ENCODE measurements at regions of chr6 and their contacts with region 1.

Region 1: GRCh38 chr6:136289579-136290409 is at the start of gene BCLAF1:
- DNase-seq: peak; percentile 98 to 100 (median 100)
- ATAC-seq: peak; percentile 84
- H3K4me3 ChIP-seq: peak within 1 kb of the TSS; percentile 93
- H3K4me3 Mint-ChIP-seq: peak within 1 kb of the TSS; percentile 94 to 100 (median 98)
- H3K27ac ChIP-seq: peak within 1 kb of the TSS; percentile 99
- H3K27ac Mint-ChIP-seq: peak within 1 kb of the TSS; percentile 99 to 100 (median 100)
- H3K4me1 ChIP-seq: peaks cover 35 to 36% of the 10 kb centered on the region in 2 donors
- H3K4me1 Mint-ChIP-seq: peaks cover 19 to 74% (median 58%) of the 10 kb centered on the region in 7 donors
- H3K27me3 ChIP-seq: no peaks in the 10 kb centered on the region
- H3K27me3 Mint-ChIP-seq: peaks cover 0 to 2% (median 0%) of the 10 kb centered on the region in 5 donors
- total RNA-seq, gene BCLAF1: 202 to 439 (median 262) TPM

Region 2: GRCh38 chr6:135054569-135055498 is 1235.0 kb before region 1 on chr6 and contains the start of gene HBS1L:
- CTCF ChIA-PET with region 1: no interaction called
- POLR2A ChIA-PET with region 1: interaction called, 8 read pairs
- intact Hi-C with region 1: loop called in 1 of 2 experiments (anchors 1 kb)
- DNase-seq: peak; percentile 93 to 98 (median 96)
- ATAC-seq: peak; percentile 97
- H3K4me3 ChIP-seq: peak within 1 kb of the TSS; percentile 96
- H3K4me3 Mint-ChIP-seq: peak within 1 kb of the TSS; percentile 89 to 100 (median 97)
- H3K27ac ChIP-seq: peak within 1 kb of the TSS; percentile 97
- H3K27ac Mint-ChIP-seq: peak within 1 kb of the TSS; percentile 97 to 100 (median 98)
- H3K4me1 ChIP-seq: peaks cover 10 to 13% of the 10 kb centered on the region in 2 donors
- H3K4me1 Mint-ChIP-seq: peaks cover 21 to 51% (median 46%) of the 10 kb centered on the region in 7 donors
- H3K27me3 ChIP-seq: no peaks in the 10 kb centered on the region
- H3K27me3 Mint-ChIP-seq: peaks cover 0 to 3% (median 0%) of the 10 kb centered on the region in 5 donors
- total RNA-seq, gene HBS1L: 70.0 to 112 (median 83.1) TPM

Region 3: GRCh38 chr6:135497412-135498269 is 792.2 kb before region 1 on chr6 and contains the start of gene AHI1:
- CTCF ChIA-PET with region 1: no interaction called
- POLR2A ChIA-PET with region 1: interaction called, 50 read pairs
- intact Hi-C with region 1: loop called (anchors 1 kb)
- DNase-seq: peak; percentile 65 to 94 (median 85)
- ATAC-seq: peak; percentile 89
- H3K4me3 ChIP-seq: peak within 1 kb of the TSS; percentile 64
- H3K4me3 Mint-ChIP-seq: peak within 1 kb of the TSS in 4 of 10 donors; percentile 32 to 53 (median 37)
- H3K27ac ChIP-seq: peak within 1 kb of the TSS; percentile 95
- H3K27ac Mint-ChIP-seq: no peak within 1 kb of the TSS
- H3K4me1 ChIP-seq: peaks cover 0 to 5% of the 10 kb centered on the region in 2 donors
- H3K4me1 Mint-ChIP-seq: peaks cover 4 to 19% (median 9%) of the 10 kb centered on the region in 7 donors
- H3K27me3 ChIP-seq: no peaks in the 10 kb centered on the region
- H3K27me3 Mint-ChIP-seq: peaks cover 0 to 3% (median 0%) of the 10 kb centered on the region in 5 donors
- total RNA-seq, gene AHI1: 12.5 to 31.3 (median 26.3) TPM

Region 4: GRCh38 chr6:135675862-135676261 is 613.9 kb before region 1 on chr6:
- CTCF ChIA-PET with region 1: no interaction called
- POLR2A ChIA-PET with region 1: no interaction called
- intact Hi-C with region 1: loop called in 1 of 2 experiments (anchors 10 kb)
- DNase-seq: peak in 7 of 9 donors; percentile 51 to 71 (median 63)
- ATAC-seq: peak; percentile 79
- H3K4me3 ChIP-seq: no peak overlapping the region
- H3K4me3 Mint-ChIP-seq: no peak overlapping the region
- H3K27ac ChIP-seq: no peak overlapping the region
- H3K27ac Mint-ChIP-seq: peak overlapping the region in 2 of 9 donors; percentile 53 to 63
- H3K4me1 ChIP-seq: no peaks in the 10 kb centered on the region
- H3K4me1 Mint-ChIP-seq: peaks cover 0 to 39% (median 0%) of the 10 kb centered on the region in 7 donors
- H3K27me3 ChIP-seq: peaks cover 0 to 4% of the 10 kb centered on the region in 2 donors
- H3K27me3 Mint-ChIP-seq: no peaks in the 10 kb centered on the region

Region 5: GRCh38 chr6:136262940-136263339 is 26.9 kb before region 1 on chr6:
- CTCF ChIA-PET with region 1: interaction called, 4 read pairs
- POLR2A ChIA-PET with region 1: interaction called, 154 read pairs
- intact Hi-C with region 1: no loop called
- DNase-seq: no peak
- ATAC-seq: peak; percentile 19
- H3K4me3 ChIP-seq: no peak overlapping the region
- H3K4me3 Mint-ChIP-seq: no peak overlapping the region
- H3K27ac ChIP-seq: no peak overlapping the region
- H3K27ac Mint-ChIP-seq: peak overlapping the region in 3 of 9 donors; percentile 7 to 12 (median 9)
- H3K4me1 ChIP-seq: peaks cover 0 to 5% of the 10 kb centered on the region in 2 donors
- H3K4me1 Mint-ChIP-seq: peaks cover 17 to 51% (median 40%) of the 10 kb centered on the region in 7 donors
- H3K27me3 ChIP-seq: no peaks in the 10 kb centered on the region
- H3K27me3 Mint-ChIP-seq: no peaks in the 10 kb centered on the region

Region 6: DNA sequence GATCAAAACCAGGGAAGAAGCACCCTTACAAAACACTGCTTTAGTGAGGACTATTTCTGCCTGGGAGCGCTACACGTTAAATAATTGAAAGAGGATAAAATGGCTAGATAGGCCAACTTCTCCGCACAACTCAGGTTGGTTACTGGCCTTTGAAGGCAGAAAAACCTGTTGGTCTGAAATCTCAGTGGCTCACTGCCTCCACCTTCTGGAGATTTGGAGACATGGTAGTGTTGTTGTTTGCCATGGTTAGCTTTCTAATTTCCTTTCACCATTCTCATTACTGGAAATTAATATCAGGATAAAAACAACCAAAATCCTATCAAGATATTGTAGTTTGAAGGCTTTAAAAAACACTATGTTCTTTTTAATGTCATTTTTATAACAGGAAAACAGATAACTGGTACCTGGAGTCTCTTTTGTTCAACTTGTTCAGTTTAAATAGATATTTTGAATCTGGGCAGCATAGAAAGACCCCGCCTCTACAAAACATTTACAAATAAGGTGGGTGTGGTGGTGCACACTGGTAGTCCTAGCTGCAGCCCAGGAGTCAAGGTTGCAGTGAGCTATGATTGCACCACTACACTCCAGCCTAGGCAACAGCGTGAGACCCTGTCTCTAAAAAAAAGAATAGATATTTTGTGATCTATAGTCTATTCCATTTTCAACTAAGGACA is 27.4 kb after region 1 on chr6:
- CTCF ChIA-PET with region 1: interaction called, 4 read pairs
- POLR2A ChIA-PET with region 1: interaction called, 22 read pairs
- intact Hi-C with region 1: loop called (anchors 1 kb)
- DNase-seq: peak; percentile 25 to 77 (median 66)
- ATAC-seq: peak; percentile 91
- H3K4me3 ChIP-seq: no peak overlapping the region
- H3K4me3 Mint-ChIP-seq: no peak overlapping the region
- H3K27ac ChIP-seq: no peak overlapping the region
- H3K27ac Mint-ChIP-seq: peak overlapping the region in 1 of 9 donors; percentile 19
- H3K4me1 ChIP-seq: no peaks in the 10 kb centered on the region
- H3K4me1 Mint-ChIP-seq: peaks cover 0 to 5% (median 0%) of the 10 kb centered on the region in 7 donors
- H3K27me3 ChIP-seq: no peaks in the 10 kb centered on the region
- H3K27me3 Mint-ChIP-seq: peaks cover 0 to 19% (median 0%) of the 10 kb centered on the region in 5 donors

Region 7: GRCh38 chr6:136822376-136823127 is 532.8 kb after region 1 on chr6 and contains the start of gene PEX7:
- CTCF ChIA-PET with region 1: no interaction called
- POLR2A ChIA-PET with region 1: interaction called, 5 read pairs
- intact Hi-C with region 1: loop called (anchors 1 kb)
- DNase-seq: peak; percentile 83 to 94 (median 92)
- ATAC-seq: peak; percentile 95
- H3K4me3 ChIP-seq: peak within 1 kb of the TSS; percentile 96
- H3K4me3 Mint-ChIP-seq: peak within 1 kb of the TSS; percentile 87 to 99 (median 94)
- H3K27ac ChIP-seq: peak within 1 kb of the TSS; percentile 91
- H3K27ac Mint-ChIP-seq: peak within 1 kb of the TSS; percentile 91 to 99 (median 96)
- H3K4me1 ChIP-seq: peaks cover 6 to 13% of the 10 kb centered on the region in 2 donors
- H3K4me1 Mint-ChIP-seq: peaks cover 13 to 50% (median 40%) of the 10 kb centered on the region in 7 donors
- H3K27me3 ChIP-seq: peaks cover 0 to 3% of the 10 kb centered on the region in 2 donors
- H3K27me3 Mint-ChIP-seq: peaks cover 3 to 10% (median 8%) of the 10 kb centered on the region in 5 donors
- total RNA-seq, gene PEX7: 4.0 to 6.2 (median 5.4) TPM